Left cardiac atrium (tissue), 4 donors: ENCODE measurements at regions of chr17 and their contacts with region 1.

Region 1: DNA sequence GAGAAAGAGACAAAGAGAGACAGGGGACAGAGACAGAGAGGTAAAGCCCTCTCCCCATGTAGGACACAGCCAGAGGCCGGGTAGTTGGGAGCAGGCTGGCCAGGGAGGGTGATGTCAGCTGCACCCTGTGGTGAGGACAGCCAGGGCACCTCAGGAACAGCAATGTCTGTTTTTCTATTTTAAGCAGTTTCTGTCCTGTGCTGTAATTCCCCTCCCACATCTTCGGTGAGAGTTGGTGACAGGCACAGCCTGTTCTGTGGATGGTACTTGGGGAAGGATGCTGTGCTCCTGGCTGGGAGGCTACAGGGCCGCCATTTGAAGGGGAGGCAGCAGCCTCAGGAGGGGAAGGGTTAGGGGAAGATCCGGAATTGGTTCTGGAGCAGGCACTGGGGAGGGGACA is 163.5 kb downstream of the SDK2 start:
- DNase-seq: peak; percentile 36
- ATAC-seq: peak; percentile 82 to 89

Region 2: GRCh38 chr17:73532421-73532901 is 51.7 kb after region 1 on chr17:
- intact Hi-C with region 1: loop called in 1 of 2 experiments (anchors 2 kb)
- DNase-seq: no peak
- ATAC-seq: peak; percentile 5 to 62